ENCODE measurements at regions of chr11 and their contacts with region 1.

Region 1: GRCh38 chr11:9765320-9766020 is 101.6 kb downstream of the SWAP70 start:
- DNase-seq: peak; percentile 90
- H3K4me3 ChIP-seq: no peak overlapping the region
- H3K27ac ChIP-seq: peak overlapping the region; percentile 99
- H3K27me3 ChIP-seq: no peaks in the 10 kb centered on the region
- CTCF ChIP-seq: no peak

Region 2: GRCh38 chr11:9802291-9802861 is 36.9 kb after region 1 on chr11:
- CTCF ChIA-PET with region 1: no interaction called
- POLR2A ChIA-PET with region 1: interaction called, 10 read pairs
- DNase-seq: peak; percentile 70
- H3K4me3 ChIP-seq: no peak overlapping the region
- H3K27ac ChIP-seq: peak overlapping the region; percentile 92
- H3K27me3 ChIP-seq: no peaks in the 10 kb centered on the region
- CTCF ChIP-seq: no peak